CD4-positive, alpha-beta memory T cell (primary cell): ENCODE measurements at regions of chr11 and their contacts with region 1.

Region 1: DNA sequence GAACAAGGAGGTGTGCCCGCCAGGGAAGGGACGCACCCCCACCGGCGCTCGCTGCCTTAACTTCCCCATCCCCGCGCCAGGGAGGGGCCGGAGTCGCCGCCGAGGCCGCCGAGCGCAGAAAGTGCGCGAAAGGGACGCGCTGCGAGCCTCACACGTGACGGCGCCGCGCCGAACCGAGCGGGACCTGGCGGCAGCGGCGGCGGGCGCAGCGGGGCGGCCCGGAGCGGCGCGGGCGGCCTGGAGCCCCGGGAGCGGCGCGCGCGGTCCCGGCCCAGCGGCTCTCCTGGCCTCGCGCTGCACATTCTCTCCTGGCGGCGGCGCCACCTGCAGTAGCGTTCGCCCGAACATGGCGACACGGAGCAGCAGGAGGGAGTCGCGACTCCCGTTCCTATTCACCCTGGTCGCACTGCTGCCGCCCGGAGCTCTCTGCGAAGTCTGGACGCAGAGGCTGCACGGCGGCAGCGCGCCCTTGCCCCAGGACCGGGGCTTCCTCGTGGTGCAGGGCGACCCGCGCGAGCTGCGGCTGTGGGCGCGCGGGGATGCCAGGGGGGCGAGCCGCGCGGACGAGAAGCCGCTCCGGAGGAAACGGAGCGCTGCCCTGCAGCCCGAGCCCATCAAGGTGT is at the start of gene SORL1:
- DNase-seq: peak; percentile 70 to 81 (median 72)
- H3K4me3 ChIP-seq: peak within 1 kb of the TSS; percentile 82 to 90
- H3K4me3 Mint-ChIP-seq: peak within 1 kb of the TSS; percentile 93 to 100 (median 98)
- H3K27ac ChIP-seq: peak within 1 kb of the TSS; percentile 79
- H3K27ac Mint-ChIP-seq: peak within 1 kb of the TSS; percentile 91 to 98 (median 96)
- H3K4me1 ChIP-seq: peaks cover 82% of the 10 kb centered on the region
- H3K4me1 Mint-ChIP-seq: peaks cover 56 to 91% (median 69%) of the 10 kb centered on the region in 4 donors
- H3K27me3 ChIP-seq: no peaks in the 10 kb centered on the region
- H3K27me3 Mint-ChIP-seq: no peaks in the 10 kb centered on the region
- total RNA-seq, gene SORL1: 610 to 660 TPM

Region 2: GRCh38 chr11:121249039-121249663 is 202.9 kb before region 1 on chr11:
- CTCF ChIA-PET with region 1: no interaction called
- POLR2A ChIA-PET with region 1: no interaction called
- intact Hi-C with region 1: loop called (anchors 1 kb)
- DNase-seq: peak; percentile 30 to 43 (median 35)
- H3K4me3 ChIP-seq: no peak overlapping the region
- H3K4me3 Mint-ChIP-seq: no peak overlapping the region
- H3K27ac ChIP-seq: no peak overlapping the region
- H3K27ac Mint-ChIP-seq: peak overlapping the region in 2 of 7 donors; percentile 0 to 18
- H3K4me1 ChIP-seq: no peaks in the 10 kb centered on the region
- H3K4me1 Mint-ChIP-seq: peaks cover 0 to 4% (median 1%) of the 10 kb centered on the region in 4 donors
- H3K27me3 ChIP-seq: no peaks in the 10 kb centered on the region
- H3K27me3 Mint-ChIP-seq: peaks cover 8% of the 10 kb centered on the region in 2 donors

Region 3: DNA sequence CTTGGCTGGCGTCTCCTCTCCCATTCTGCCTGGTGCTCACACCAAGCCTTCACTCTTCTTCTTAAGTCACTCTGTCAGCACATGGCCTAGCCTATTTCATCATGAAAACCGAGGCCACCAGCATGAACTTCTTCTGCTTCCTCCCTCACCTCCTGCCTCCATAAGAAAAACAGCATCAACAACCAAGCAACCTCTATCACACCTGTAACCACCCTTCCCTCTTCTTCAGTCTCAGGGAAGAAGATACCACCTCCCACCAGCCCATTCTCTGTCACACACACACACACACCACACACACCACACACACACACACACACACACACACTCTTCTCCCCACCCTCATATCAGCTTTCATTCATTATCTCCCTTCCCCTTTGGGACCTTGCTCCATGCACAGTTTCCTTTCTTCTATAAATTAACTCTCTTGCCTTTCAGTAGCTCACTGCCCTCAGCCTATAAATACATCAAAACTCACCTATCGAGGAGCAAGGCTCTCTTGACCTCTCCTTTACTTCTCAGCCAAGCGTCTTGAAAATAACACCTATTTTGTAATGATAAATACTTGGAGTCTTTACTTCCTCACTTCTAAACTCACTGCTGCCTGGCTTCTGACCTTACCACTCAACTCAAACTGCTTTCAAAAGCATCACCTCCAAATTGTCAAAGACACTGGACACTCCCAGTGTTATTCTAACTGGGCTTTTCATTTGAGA is 123.0 kb before region 1 on chr11:
- CTCF ChIA-PET with region 1: interaction called, 19 read pairs
- POLR2A ChIA-PET with region 1: interaction called, 81 read pairs
- intact Hi-C with region 1: no loop called
- DNase-seq: peak in 3 of 5 donors; percentile 15 to 25 (median 22)
- H3K4me3 ChIP-seq: no peak overlapping the region
- H3K4me3 Mint-ChIP-seq: no peak overlapping the region
- H3K27ac ChIP-seq: peak overlapping the region; percentile 31
- H3K27ac Mint-ChIP-seq: no peak overlapping the region
- H3K4me1 ChIP-seq: peaks cover 40% of the 10 kb centered on the region
- H3K4me1 Mint-ChIP-seq: peaks cover 10 to 13% (median 11%) of the 10 kb centered on the region in 4 donors
- H3K27me3 ChIP-seq: no peaks in the 10 kb centered on the region
- H3K27me3 Mint-ChIP-seq: peaks cover 0 to 2% of the 10 kb centered on the region in 2 donors

Region 4: DNA sequence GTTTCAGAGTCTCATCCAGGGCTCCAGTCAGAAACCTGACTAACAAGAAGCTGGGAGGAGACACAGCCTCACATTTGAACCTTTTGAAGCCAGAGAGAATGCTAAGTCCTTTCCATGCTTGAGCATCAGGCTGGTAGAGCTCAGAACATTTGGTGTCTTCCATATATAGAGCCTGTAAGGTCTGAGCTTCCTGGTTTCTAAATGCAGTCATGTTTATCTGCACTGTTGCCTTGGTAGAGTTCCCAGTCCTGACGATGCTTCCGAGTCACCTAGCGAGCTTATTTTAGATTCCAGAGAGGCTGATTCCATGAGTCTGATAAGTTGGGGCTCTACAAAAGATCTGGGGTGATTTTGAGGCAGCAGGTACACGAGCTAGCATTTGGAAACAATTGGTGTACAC is 68.4 kb before region 1 on chr11:
- CTCF ChIA-PET with region 1: interaction called, 13 read pairs
- POLR2A ChIA-PET with region 1: interaction called, 43 read pairs
- intact Hi-C with region 1: loop called (anchors 5 kb)
- DNase-seq: no peak
- H3K4me3 ChIP-seq: no peak overlapping the region
- H3K4me3 Mint-ChIP-seq: peak overlapping the region in 1 of 8 donors; percentile 19
- H3K27ac ChIP-seq: no peak overlapping the region
- H3K27ac Mint-ChIP-seq: no peak overlapping the region
- H3K4me1 ChIP-seq: peaks cover 18% of the 10 kb centered on the region
- H3K4me1 Mint-ChIP-seq: peaks cover 18 to 35% (median 25%) of the 10 kb centered on the region in 4 donors
- H3K27me3 ChIP-seq: no peaks in the 10 kb centered on the region
- H3K27me3 Mint-ChIP-seq: no peaks in the 10 kb centered on the region

Region 5: GRCh38 chr11:121437018-121437685 is 14.9 kb before region 1 on chr11:
- CTCF ChIA-PET with region 1: interaction called, 9 read pairs
- POLR2A ChIA-PET with region 1: interaction called, 67 read pairs
- intact Hi-C with region 1: no loop called
- DNase-seq: no peak
- H3K4me3 ChIP-seq: no peak overlapping the region
- H3K4me3 Mint-ChIP-seq: no peak overlapping the region
- H3K27ac ChIP-seq: no peak overlapping the region
- H3K27ac Mint-ChIP-seq: peak overlapping the region in 1 of 7 donors; percentile 7
- H3K4me1 ChIP-seq: peaks cover 21% of the 10 kb centered on the region
- H3K4me1 Mint-ChIP-seq: peaks cover 15 to 59% (median 35%) of the 10 kb centered on the region in 4 donors
- H3K27me3 ChIP-seq: no peaks in the 10 kb centered on the region
- H3K27me3 Mint-ChIP-seq: no peaks in the 10 kb centered on the region

Region 6: DNA sequence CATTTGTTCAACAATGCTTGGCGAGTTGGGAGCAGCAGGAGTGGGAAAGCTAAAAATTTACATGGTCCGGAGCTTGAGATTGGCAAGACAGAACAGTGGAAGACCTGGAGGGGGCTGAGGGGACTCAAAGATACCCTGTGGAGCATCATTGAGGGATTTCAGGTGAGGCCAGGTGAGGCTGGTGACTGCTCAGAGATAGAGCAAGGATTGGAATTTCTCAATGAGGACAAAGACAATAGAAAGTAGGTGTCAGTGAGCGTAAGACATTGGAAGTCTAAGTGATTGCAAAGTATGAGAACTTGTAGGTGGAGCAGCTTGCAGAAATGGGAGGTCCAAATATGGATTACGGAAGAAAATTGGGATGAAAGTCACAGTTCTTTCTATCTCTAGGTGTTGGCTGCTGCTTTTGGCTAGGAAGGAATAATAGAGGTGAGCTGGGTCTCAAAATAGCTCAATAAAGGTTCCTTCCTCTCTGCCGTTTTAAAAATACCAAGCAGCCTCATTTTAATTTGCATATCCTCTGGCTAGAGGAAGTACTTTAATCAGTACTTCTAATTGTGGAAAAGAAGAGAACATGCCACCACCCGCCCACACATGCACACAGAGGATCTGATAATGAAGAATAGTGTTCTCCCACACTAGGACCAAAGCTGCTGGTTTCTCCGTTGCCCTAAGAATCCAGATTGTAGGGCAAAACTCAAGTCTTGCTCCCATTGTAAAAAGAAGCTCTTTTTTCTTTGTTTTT is 42.4 kb after region 1 on chr11:
- CTCF ChIA-PET with region 1: interaction called, 7 read pairs
- POLR2A ChIA-PET with region 1: interaction called, 60 read pairs
- intact Hi-C with region 1: loop called (anchors 2 kb)
- DNase-seq: peak; percentile 23 to 43 (median 27)
- H3K4me3 ChIP-seq: no peak overlapping the region
- H3K4me3 Mint-ChIP-seq: peak overlapping the region; percentile 18 to 82 (median 58)
- H3K27ac ChIP-seq: no peak overlapping the region
- H3K27ac Mint-ChIP-seq: peak overlapping the region; percentile 48 to 90 (median 79)
- H3K4me1 ChIP-seq: peaks cover 30% of the 10 kb centered on the region
- H3K4me1 Mint-ChIP-seq: peaks cover 49 to 82% (median 62%) of the 10 kb centered on the region in 4 donors
- H3K27me3 ChIP-seq: no peaks in the 10 kb centered on the region
- H3K27me3 Mint-ChIP-seq: no peaks in the 10 kb centered on the region